Right ventricle myocardium superior (tissue), 1 donor: ENCODE measurements at regions of chr16 and their contacts with region 1.

Region 1: GRCh38 chr16:78503602-78504001 is 404.1 kb downstream of the WWOX start:
- DNase-seq: no peak
- ATAC-seq: peak; percentile 40

Region 2: GRCh38 chr16:78607486-78607885 is 103.9 kb after region 1 on chr16:
- intact Hi-C with region 1: no loop called
- DNase-seq: no peak
- ATAC-seq: peak; percentile 70

Region 3: GRCh38 chr16:78770353-78771091 is 266.9 kb after region 1 on chr16:
- intact Hi-C with region 1: loop called (anchors 5 kb)
- DNase-seq: peak; percentile 86
- ATAC-seq: peak; percentile 82

Region 4: DNA sequence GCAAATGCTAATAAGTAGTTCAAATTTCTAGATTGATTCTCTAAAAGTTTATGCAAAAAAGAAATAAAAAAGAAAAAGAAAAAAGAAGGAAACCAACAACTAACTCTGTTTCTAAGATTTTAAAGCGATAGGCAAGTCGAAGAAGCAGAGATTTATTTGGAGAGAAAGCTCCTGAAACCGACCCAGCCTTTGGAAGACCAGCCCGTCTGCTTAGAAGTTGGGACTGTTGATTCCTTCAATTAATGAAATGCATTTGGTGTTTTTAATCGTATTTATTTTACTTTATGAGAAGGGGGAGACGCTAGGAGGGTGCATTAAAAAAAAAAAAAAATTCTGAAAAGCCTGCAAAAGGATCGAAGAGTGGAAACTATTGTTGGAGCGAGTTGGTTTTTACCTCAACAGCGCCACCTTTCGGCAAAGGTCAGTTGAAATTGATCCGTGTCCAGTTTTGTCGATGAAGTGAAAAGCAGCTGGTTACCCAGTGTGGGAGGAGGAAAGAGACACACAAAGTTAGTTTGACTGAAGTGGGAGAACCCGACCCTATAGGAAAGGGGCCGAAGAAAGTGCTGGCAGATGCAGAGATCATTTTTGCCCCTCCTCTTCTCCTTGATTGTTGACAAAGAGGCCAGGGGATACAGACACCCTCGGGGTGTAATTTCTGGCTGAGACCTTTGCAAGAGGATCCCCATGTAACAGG is 1098.5 kb after region 1 on chr16:
- intact Hi-C with region 1: loop called (anchors 5 kb)
- DNase-seq: peak; percentile 75
- ATAC-seq: peak; percentile 62